Activated B cell treated with CpG ODN at 0.5 μM for 24 hours (primary cell): ENCODE measurements at regions of chr3 and their contacts with region 1.

Region 1: GRCh38 chr3:25648107-25648535 is 16.6 kb downstream of the TOP2B start:
- DNase-seq: no peak
- ATAC-seq: peak; percentile 94
- H3K4me3 Mint-ChIP-seq: no peak overlapping the region
- H3K27ac Mint-ChIP-seq: no peak overlapping the region
- H3K4me1 Mint-ChIP-seq: peaks cover 37% of the 10 kb centered on the region
- H3K27me3 Mint-ChIP-seq: no peaks in the 10 kb centered on the region
- CTCF ChIP-seq: no peak

Region 2: GRCh38 chr3:25493786-25494185 is 154.3 kb before region 1 on chr3:
- CTCF ChIA-PET with region 1: no interaction called
- POLR2A ChIA-PET with region 1: no interaction called
- intact Hi-C with region 1: no loop called
- DNase-seq: no peak
- ATAC-seq: no peak
- H3K4me3 Mint-ChIP-seq: no peak overlapping the region
- H3K27ac Mint-ChIP-seq: no peak overlapping the region
- H3K4me1 Mint-ChIP-seq: no peaks in the 10 kb centered on the region
- H3K27me3 Mint-ChIP-seq: no peaks in the 10 kb centered on the region
- CTCF ChIP-seq: no peak

Region 3: GRCh38 chr3:25658836-25659235 is 10.7 kb after region 1 on chr3:
- CTCF ChIA-PET with region 1: interaction called, 14 read pairs
- POLR2A ChIA-PET with region 1: interaction called, 5 read pairs
- intact Hi-C with region 1: loop called (anchors 1 kb)
- DNase-seq: no peak
- ATAC-seq: no peak
- H3K4me3 Mint-ChIP-seq: no peak overlapping the region
- H3K27ac Mint-ChIP-seq: no peak overlapping the region
- H3K4me1 Mint-ChIP-seq: peaks cover 85% of the 10 kb centered on the region
- H3K27me3 Mint-ChIP-seq: no peaks in the 10 kb centered on the region
- CTCF ChIP-seq: no peak

Region 4: DNA sequence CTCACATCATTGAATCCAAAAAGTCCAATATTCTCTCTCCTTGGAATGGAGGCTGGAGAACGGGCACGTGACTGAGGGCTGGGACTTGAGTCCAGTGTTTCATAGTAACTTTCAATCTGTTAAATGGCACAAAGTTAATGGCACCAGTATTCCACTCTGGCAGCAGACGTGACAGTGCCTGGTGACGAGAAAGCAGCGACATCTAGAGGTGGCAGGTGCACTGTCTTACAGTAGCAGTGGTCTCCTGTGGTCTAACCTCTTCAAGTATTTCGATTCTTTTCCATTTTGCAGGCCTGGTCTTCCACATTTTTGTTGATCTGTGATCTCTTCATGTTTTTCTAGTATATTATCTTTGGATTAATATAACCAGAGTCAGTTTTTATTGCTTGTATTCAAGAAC is 248.9 kb after region 1 on chr3:
- CTCF ChIA-PET with region 1: no interaction called
- POLR2A ChIA-PET with region 1: no interaction called
- intact Hi-C with region 1: loop called (anchors 1 kb)
- DNase-seq: no peak
- ATAC-seq: no peak
- H3K4me3 Mint-ChIP-seq: no peak overlapping the region
- H3K27ac Mint-ChIP-seq: no peak overlapping the region
- H3K4me1 Mint-ChIP-seq: peaks cover 2% of the 10 kb centered on the region
- H3K27me3 Mint-ChIP-seq: no peaks in the 10 kb centered on the region
- CTCF ChIP-seq: no peak

Region 5: DNA sequence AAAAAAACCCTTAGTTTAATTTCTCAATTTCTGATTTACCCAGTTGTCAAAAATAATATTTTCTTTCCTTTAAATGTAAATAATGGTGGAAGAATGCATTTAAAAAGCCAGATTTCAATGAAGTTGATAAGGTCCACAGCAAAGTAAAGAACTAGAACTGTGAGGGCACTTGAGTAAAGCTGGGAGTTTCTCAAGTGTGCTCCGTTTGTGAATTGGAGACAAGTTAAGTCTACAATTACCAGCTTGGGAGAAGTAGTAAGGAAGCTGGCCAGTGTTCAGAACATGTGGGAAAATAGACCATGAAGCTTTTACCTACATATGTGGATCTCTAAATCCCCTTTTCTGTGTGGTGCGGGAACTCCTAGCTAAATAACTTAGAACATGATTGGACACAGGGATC is 381.2 kb after region 1 on chr3:
- CTCF ChIA-PET with region 1: no interaction called
- POLR2A ChIA-PET with region 1: no interaction called
- intact Hi-C with region 1: no loop called
- DNase-seq: no peak
- ATAC-seq: no peak
- H3K4me3 Mint-ChIP-seq: no peak overlapping the region
- H3K27ac Mint-ChIP-seq: no peak overlapping the region
- H3K4me1 Mint-ChIP-seq: no peaks in the 10 kb centered on the region
- H3K27me3 Mint-ChIP-seq: no peaks in the 10 kb centered on the region
- CTCF ChIP-seq: no peak

Region 6: DNA sequence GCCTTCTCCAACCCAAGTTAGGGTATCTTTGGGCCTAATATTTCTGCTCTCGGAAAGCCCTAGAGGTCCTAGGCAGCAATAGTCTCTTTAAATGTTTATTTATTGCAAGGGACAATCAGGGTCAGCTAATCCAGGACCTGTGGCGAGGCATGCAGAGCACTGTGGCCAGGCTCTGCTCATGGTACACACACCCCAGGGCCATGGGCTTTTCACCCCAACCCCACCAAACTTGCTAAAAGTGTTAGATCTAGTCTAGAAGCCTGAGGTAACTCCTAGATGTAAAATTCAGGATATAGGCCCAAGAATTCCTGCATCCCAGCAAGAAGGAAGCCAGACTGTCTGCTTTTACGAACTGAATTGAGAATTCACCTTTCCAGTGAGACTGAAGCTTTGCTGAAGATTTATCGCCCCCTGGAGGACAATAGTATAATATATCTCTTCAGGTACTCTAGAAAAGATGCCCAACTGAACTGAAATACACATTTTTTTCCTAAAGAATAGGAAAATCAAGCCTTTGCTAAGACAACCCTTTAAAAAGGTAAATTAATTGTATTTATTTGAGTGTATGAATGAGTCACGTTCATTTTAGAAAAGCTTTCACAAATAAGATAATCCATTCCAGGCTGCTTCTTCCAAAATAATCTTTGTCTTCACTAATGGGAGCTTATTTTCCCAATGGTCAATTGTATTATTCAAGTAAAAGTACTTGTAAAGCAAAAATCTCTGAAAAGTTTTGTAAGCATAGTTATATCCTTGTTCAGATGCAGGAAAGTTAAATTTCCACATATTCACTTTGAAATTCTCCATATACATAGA is 1064.3 kb after region 1 on chr3:
- CTCF ChIA-PET with region 1: interaction called, 5 read pairs
- POLR2A ChIA-PET with region 1: no interaction called
- intact Hi-C with region 1: loop called (anchors 1 kb)
- DNase-seq: no peak
- ATAC-seq: no peak
- H3K4me3 Mint-ChIP-seq: no peak overlapping the region
- H3K27ac Mint-ChIP-seq: no peak overlapping the region
- H3K4me1 Mint-ChIP-seq: no peaks in the 10 kb centered on the region
- H3K27me3 Mint-ChIP-seq: no peaks in the 10 kb centered on the region
- CTCF ChIP-seq: no peak